ENCODE measurements at regions of chrX and their contacts with region 1.

Region 1: DNA sequence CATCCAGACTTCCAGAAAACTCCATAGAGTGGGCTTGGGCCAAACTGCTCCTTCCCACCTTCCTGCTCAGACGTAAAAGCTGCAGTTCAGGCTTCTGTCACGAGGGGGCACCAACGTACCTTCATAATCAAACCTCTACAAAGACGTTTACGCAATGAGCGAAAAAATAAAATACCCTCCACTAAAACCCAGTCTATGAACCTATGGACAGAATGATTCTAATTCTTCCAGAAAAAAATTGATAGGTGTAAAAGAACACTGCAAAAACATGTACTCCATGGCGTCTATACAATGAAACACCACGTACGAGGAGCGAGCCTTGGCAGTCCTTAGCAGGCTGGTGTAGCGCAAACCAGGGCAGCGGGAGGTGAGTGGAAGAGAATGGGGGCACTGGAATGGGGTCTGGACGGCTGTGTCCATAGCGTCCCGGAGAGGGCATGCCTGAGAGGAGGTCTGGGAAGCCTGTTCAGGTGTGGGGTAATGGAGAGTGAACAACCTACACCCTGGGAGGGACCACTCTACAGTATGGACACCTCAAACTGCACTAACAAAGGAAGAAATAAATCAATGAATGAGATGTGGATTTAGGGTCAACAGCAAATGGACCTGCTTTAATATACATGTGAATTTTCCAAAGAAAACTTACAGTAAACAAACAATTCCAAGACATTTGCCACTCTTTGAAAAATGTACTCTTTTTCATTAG is 14.4 kb upstream of the RAB40A start:
- DNase-seq: peak; percentile 69
- H3K4me3 ChIP-seq: peak overlapping the region in 1 of 3 experiments; percentile 5
- H3K27ac ChIP-seq: no peak overlapping the region
- H3K4me1 ChIP-seq: no peaks in the 10 kb centered on the region
- H3K27me3 ChIP-seq: no peaks in the 10 kb centered on the region
- CTCF ChIP-seq: peak; percentile 61 to 62
- POLR2A ChIP-seq: no peak

Region 2: DNA sequence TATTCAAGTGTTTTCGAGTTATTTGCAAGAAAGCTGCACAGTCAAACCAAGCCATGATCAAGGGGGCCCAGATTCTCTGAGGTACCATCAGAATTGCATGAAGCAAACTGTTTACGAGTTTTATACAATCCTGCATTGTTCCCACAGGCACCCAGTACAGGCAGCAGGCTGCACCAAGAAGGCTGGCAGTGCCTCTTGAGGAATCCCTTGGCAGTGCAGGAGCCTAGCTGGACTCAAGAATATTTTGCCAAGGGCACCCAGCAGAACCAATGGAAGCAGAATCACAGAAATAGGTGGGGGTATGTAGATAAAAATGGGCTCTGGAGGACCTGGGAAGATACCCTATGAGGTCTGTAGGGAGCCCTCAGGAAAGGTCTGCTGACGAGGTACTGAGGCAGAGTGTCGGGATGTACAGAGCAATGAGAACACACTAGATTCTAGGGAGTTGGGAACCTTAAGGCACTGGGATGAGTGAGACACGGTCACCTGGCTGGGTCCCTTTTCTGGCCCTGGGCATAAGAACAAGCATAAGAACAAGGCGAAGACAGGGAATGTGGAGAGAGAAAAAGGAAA is 240.5 kb after region 1 on chrX:
- CTCF ChIA-PET with region 1: interaction called, 17 read pairs
- POLR2A ChIA-PET with region 1: no interaction called
- dilution Hi-C with region 1: no loop called
- intact Hi-C with region 1: loop called (anchors 1 kb)
- DNase-seq: peak; percentile 40
- H3K4me3 ChIP-seq: no peak overlapping the region
- H3K27ac ChIP-seq: no peak overlapping the region
- H3K4me1 ChIP-seq: no peaks in the 10 kb centered on the region
- H3K27me3 ChIP-seq: peaks cover 0 to 2% of the 10 kb centered on the region in 2 experiments
- CTCF ChIP-seq: peak; percentile 39 to 40
- POLR2A ChIP-seq: no peak

Region 3: DNA sequence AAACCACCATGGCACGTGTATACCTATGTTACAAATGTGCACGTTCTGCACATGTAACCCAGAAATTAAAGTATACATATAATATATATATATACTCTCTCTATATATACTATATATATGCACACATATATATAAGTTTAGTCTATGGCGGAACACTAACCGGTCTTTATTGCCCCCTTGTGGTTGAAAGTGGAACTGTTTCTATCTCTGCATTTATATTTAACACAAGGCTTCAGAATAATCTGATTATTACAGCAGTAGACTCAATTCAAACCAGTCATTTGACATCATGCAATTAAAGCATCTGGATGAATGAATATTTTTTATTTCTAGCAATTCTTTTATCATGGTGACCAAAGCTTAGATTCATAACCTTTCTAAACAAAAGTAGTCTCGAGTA is 283.8 kb after region 1 on chrX:
- CTCF ChIA-PET with region 1: interaction called, 6 read pairs
- POLR2A ChIA-PET with region 1: no interaction called
- dilution Hi-C with region 1: no loop called
- intact Hi-C with region 1: loop called (anchors 1 kb)
- DNase-seq: peak; percentile 53
- H3K4me3 ChIP-seq: no peak overlapping the region
- H3K27ac ChIP-seq: no peak overlapping the region
- H3K4me1 ChIP-seq: no peaks in the 10 kb centered on the region
- H3K27me3 ChIP-seq: no peaks in the 10 kb centered on the region
- CTCF ChIP-seq: peak in 1 of 2 donors; percentile 18
- POLR2A ChIP-seq: no peak

Measured in endothelial cell of umbilical vein (primary cell).